CD4-positive, alpha-beta memory T cell (primary cell): ENCODE measurements at regions of chr4 and their contacts with region 1.

Region 1: DNA sequence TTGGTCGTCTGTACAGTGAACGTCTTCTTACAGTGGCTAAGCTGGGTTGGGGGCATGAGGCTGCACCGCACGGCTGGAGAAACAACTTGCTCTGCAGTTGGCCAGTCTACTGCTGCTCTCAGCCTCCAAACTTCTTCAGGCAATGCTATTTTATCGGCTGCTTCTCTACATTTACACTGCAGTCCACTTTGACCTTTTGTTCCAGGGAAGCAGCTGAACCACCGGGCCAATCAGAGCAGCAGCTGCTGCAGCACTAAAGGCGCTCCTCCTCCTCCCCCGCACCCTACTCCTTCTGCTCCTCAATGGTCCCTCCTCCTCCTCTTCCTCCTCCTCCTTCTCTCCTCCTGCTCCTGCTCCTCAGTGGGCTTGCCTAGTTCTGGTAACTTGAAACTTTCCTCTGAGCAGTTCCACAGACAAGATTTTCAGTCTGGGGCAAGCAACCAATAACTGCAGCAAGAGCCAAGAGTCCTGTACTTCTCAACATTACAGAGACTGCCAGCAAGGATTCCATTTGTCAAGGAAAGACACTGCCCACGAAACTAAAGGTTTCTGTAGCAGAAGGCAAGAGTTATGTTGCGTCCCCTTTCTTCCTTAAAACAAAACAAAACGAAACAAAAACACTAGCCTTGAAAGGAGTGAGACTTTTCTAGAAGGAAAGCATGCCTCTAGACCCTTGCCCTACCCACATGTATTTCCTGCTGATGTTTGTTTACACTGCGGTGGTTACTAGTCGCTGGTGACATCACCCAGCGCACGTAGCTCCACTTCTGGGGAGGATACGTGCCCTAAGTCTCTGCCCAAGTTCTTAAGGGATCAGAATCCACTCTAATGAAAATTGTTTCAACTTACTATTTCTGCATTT is 125.7 kb upstream of the NAP1L5 start:
- DNase-seq: peak; percentile 79 to 91 (median 88)
- H3K4me3 ChIP-seq: peak overlapping the region; percentile 57 to 72
- H3K4me3 Mint-ChIP-seq: peak overlapping the region; percentile 89 to 98 (median 94)
- H3K27ac ChIP-seq: peak overlapping the region; percentile 71
- H3K27ac Mint-ChIP-seq: peak overlapping the region; percentile 92 to 99 (median 98)
- H3K4me1 ChIP-seq: peaks cover 33% of the 10 kb centered on the region
- H3K4me1 Mint-ChIP-seq: peaks cover 23 to 45% (median 32%) of the 10 kb centered on the region in 4 donors
- H3K27me3 ChIP-seq: no peaks in the 10 kb centered on the region
- H3K27me3 Mint-ChIP-seq: peaks cover 0 to under 1% of the 10 kb centered on the region in 2 donors

Region 2: GRCh38 chr4:87422104-87423052 is 1400.9 kb before region 1 on chr4 and contains the start of gene NUDT9:
- CTCF ChIA-PET with region 1: no interaction called
- POLR2A ChIA-PET with region 1: no interaction called
- intact Hi-C with region 1: loop called (anchors 5 kb)
- DNase-seq: peak; percentile 88 to 93 (median 91)
- H3K4me3 ChIP-seq: peak within 1 kb of the TSS; percentile 80 to 93
- H3K4me3 Mint-ChIP-seq: peak within 1 kb of the TSS; percentile 96 to 99 (median 99)
- H3K27ac ChIP-seq: peak within 1 kb of the TSS; percentile 82
- H3K27ac Mint-ChIP-seq: peak within 1 kb of the TSS; percentile 98 to 100 (median 99)
- H3K4me1 ChIP-seq: peaks cover 33% of the 10 kb centered on the region
- H3K4me1 Mint-ChIP-seq: peaks cover 14 to 50% (median 34%) of the 10 kb centered on the region in 4 donors
- H3K27me3 ChIP-seq: no peaks in the 10 kb centered on the region
- H3K27me3 Mint-ChIP-seq: no peaks in the 10 kb centered on the region
- total RNA-seq, gene NUDT9: 16.7 to 18.3 TPM

Region 3: DNA sequence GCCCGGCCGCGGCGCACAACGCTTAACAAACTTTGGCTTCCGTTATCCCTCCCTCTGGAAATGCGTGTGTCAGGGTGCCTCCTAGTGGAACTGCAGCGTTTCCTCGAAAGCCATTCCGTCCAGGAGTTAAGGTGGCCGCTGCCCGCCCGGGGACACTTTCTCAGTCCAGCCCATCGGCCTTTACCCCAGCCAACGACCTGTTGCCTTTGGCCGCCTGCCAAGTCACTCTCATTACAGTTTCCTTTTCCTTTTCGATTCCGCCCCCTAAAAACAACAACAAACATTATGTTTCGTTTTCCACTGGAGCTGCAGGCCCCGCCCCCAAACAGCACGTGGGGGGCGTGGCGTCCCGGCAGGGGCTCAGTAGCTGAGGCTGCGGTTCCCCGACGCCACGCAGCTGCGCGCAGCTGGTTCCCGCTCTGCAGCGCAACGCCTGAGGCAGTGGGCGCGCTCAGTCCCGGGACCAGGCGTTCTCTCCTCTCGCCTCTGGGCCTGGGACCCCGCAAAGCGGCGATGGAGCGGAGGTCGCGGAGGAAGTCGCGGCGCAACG is 366.5 kb before region 1 on chr4 and contains the start of gene HERC5:
- CTCF ChIA-PET with region 1: no interaction called
- POLR2A ChIA-PET with region 1: interaction called, 3 read pairs
- intact Hi-C with region 1: loop called (anchors 1 kb)
- DNase-seq: peak; percentile 92 to 96 (median 95)
- H3K4me3 ChIP-seq: peak within 1 kb of the TSS; percentile 76 to 96
- H3K4me3 Mint-ChIP-seq: peak within 1 kb of the TSS; percentile 96 to 100 (median 100)
- H3K27ac ChIP-seq: peak within 1 kb of the TSS; percentile 71
- H3K27ac Mint-ChIP-seq: peak within 1 kb of the TSS; percentile 89 to 100 (median 100)
- H3K4me1 ChIP-seq: peaks cover 28% of the 10 kb centered on the region
- H3K4me1 Mint-ChIP-seq: peaks cover 21 to 37% (median 28%) of the 10 kb centered on the region in 4 donors
- H3K27me3 ChIP-seq: no peaks in the 10 kb centered on the region
- H3K27me3 Mint-ChIP-seq: no peaks in the 10 kb centered on the region
- total RNA-seq, gene HERC5: 18.6 to 22.1 TPM

Region 4: DNA sequence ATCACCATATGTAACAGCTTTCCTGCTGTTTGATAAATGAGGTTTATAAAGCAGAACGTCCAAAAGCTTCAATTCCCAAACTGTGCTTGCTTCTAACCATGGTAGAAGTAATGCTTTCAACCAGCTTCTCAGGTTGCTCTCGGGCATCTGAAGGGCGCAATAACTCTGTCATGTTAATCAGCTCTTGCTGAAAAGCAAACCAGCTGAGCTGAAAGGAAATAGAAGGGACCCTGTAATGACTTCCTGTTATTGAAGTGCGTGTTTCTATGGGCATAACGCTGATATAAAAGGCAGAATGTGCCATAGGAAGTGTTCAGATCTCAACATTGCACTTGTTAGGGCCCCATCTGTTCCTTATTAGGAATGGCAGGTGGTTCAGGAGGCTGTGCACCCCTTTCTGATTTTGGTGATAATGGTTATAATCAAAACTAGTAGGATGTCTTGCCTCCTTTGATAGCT is 209.8 kb before region 1 on chr4:
- CTCF ChIA-PET with region 1: interaction called, 3 read pairs
- POLR2A ChIA-PET with region 1: no interaction called
- intact Hi-C with region 1: loop called (anchors 1 kb)
- DNase-seq: peak; percentile 76 to 87 (median 84)
- H3K4me3 ChIP-seq: peak overlapping the region in 1 of 2 donors; percentile 43
- H3K4me3 Mint-ChIP-seq: peak overlapping the region; percentile 69 to 88 (median 79)
- H3K27ac ChIP-seq: peak overlapping the region; percentile 62
- H3K27ac Mint-ChIP-seq: peak overlapping the region; percentile 93 to 99 (median 97)
- H3K4me1 ChIP-seq: peaks cover 67% of the 10 kb centered on the region
- H3K4me1 Mint-ChIP-seq: peaks cover 65 to 91% (median 77%) of the 10 kb centered on the region in 4 donors
- H3K27me3 ChIP-seq: no peaks in the 10 kb centered on the region
- H3K27me3 Mint-ChIP-seq: no peaks in the 10 kb centered on the region

Region 5: DNA sequence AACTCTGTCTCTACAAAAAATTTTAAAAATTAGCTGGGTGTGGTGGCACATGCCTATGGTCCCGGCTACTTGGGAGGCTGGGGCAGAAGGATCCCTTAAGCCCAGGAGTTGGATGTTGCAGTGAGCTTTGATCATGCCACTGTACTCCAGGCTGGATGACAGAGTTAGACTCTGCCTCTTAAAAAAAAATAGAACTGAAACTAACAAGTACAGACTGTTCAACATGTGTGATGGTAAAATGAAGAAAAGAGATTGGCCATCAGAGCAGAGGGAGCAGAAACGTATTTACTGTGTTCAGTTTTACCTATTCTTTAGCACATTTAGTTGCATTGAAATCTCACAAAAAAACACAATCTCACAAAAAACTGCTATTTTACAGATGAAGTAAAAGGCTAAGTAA is 47.8 kb before region 1 on chr4:
- CTCF ChIA-PET with region 1: no interaction called
- POLR2A ChIA-PET with region 1: no interaction called
- intact Hi-C with region 1: no loop called
- DNase-seq: no peak
- H3K4me3 ChIP-seq: no peak overlapping the region
- H3K4me3 Mint-ChIP-seq: no peak overlapping the region
- H3K27ac ChIP-seq: no peak overlapping the region
- H3K27ac Mint-ChIP-seq: no peak overlapping the region
- H3K4me1 ChIP-seq: no peaks in the 10 kb centered on the region
- H3K4me1 Mint-ChIP-seq: no peaks in the 10 kb centered on the region
- H3K27me3 ChIP-seq: no peaks in the 10 kb centered on the region
- H3K27me3 Mint-ChIP-seq: no peaks in the 10 kb centered on the region

Region 6: GRCh38 chr4:88843067-88843685 is 19.9 kb after region 1 on chr4:
- CTCF ChIA-PET with region 1: interaction called, 12 read pairs
- POLR2A ChIA-PET with region 1: no interaction called
- intact Hi-C with region 1: no loop called
- DNase-seq: no peak
- H3K4me3 ChIP-seq: no peak overlapping the region
- H3K4me3 Mint-ChIP-seq: no peak overlapping the region
- H3K27ac ChIP-seq: no peak overlapping the region
- H3K27ac Mint-ChIP-seq: no peak overlapping the region
- H3K4me1 ChIP-seq: no peaks in the 10 kb centered on the region
- H3K4me1 Mint-ChIP-seq: no peaks in the 10 kb centered on the region
- H3K27me3 ChIP-seq: no peaks in the 10 kb centered on the region
- H3K27me3 Mint-ChIP-seq: no peaks in the 10 kb centered on the region

Region 7: DNA sequence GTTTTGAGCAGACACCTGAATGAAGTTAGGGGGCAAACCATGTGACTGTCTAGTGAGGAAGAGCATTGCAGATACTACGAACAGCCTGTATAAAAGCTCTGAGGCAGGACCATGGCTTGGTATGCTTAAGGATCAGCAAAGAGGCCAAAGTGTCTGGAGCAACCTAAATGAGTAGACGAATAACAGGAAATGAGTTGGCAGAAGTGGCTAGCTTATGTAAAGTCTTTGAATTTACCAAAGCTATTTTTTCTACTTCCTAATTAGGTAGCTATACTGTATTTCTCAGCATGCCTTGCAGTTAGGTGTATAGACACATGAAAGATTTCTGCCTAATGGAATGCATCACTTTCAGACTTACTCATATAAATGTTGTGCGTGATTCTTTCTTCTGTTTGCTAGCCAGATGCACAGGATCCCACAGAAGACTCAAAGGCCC is 493.7 kb after region 1 on chr4:
- CTCF ChIA-PET with region 1: no interaction called
- POLR2A ChIA-PET with region 1: no interaction called
- intact Hi-C with region 1: loop called (anchors 10 kb)
- DNase-seq: peak in 4 of 5 donors; percentile 39 to 74 (median 42)
- H3K4me3 ChIP-seq: peak overlapping the region; percentile 8 to 18
- H3K4me3 Mint-ChIP-seq: peak overlapping the region; percentile 43 to 80 (median 72)
- H3K27ac ChIP-seq: peak overlapping the region; percentile 55
- H3K27ac Mint-ChIP-seq: peak overlapping the region; percentile 87 to 95 (median 93)
- H3K4me1 ChIP-seq: peaks cover 34% of the 10 kb centered on the region
- H3K4me1 Mint-ChIP-seq: peaks cover 27 to 48% (median 35%) of the 10 kb centered on the region in 4 donors
- H3K27me3 ChIP-seq: no peaks in the 10 kb centered on the region
- H3K27me3 Mint-ChIP-seq: no peaks in the 10 kb centered on the region